A549 (cell line): ENCODE measurements at regions of chr14 and their contacts with region 1.

Region 1: DNA sequence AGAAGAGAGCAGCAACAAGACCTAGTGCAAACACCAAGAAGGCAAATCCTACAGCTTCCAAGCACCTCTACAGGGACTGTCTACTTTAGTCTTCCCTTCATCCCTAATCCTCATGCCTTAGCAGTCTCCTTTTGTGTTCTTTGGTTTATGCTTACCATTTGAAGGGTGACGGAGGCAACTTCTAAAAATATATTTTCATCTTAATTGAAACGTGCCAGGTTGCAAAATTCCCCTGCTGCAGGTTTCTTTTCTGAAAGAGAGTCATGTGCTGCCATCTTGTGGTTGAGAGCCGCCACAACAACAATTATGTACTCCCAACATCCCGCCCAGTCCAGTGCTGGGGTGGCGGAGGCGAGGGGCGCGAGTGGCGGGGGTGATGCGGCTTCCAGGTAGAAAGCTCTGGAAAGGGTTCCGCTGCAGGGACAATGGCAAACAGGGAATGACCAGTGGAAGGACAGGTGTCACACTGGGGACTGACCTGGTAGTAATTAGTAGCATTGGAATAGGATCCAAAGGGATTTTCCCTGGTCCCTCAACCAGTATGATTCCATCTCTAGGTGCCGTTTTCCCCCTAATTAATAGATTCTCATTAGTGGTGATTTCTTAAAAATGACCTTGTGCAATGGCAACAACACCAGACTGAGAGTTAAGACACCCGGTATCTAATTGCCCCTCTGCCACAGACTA is 80.3 kb upstream of the GNG2 start:
- DNase-seq: peak; percentile 61 to 72
- ATAC-seq: peak; percentile 38 to 76; a peak in 4 of 6 replicates
- H3K4me3 ChIP-seq: 0 out of 3 replicates have a peak overlapping the region, but pooled peaks have one; percentile 11
- H3K27ac ChIP-seq: no peak overlapping the region
- H3K4me1 ChIP-seq: no peaks in the 10 kb centered on the region
- CTCF ChIP-seq: peak; percentile 84
- EP300 ChIP-seq: no peak
- POLR2A ChIP-seq: no peak
- RAD21 ChIP-seq: peak; percentile 88 to 92

Region 2: DNA sequence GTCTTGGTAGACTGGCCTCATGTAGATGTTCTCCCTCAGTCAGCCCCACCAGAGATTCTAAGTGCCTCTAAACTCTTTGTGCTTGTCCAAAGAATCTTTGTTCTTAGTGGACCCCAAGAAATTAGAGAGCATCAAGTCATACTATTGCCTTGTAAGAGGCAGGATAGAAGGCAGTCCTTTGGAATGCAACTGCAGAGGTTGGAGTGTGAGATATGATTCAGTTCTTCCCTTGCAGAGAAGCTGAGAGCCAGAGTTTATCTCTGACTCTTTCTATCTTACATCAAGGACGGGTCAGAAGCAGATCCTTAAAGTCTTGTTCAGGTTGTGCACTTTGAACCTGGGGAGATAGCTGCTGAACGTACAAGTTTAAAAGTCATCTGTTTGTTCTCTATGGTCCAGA is 519.0 kb before region 1 on chr14:
- CTCF ChIA-PET with region 1: interaction called, 10 read pairs
- POLR2A ChIA-PET with region 1: no interaction called
- DNase-seq: no peak
- ATAC-seq: no peak
- H3K4me3 ChIP-seq: no peak overlapping the region
- H3K27ac ChIP-seq: no peak overlapping the region
- H3K4me1 ChIP-seq: no peaks in the 10 kb centered on the region
- CTCF ChIP-seq: no peak
- EP300 ChIP-seq: no peak
- POLR2A ChIP-seq: no peak
- RAD21 ChIP-seq: no peak

Region 3: GRCh38 chr14:51283402-51284085 is 496.6 kb before region 1 on chr14:
- CTCF ChIA-PET with region 1: interaction called, 512 read pairs
- POLR2A ChIA-PET with region 1: interaction called, 6 read pairs
- DNase-seq: peak; percentile 78 to 81
- ATAC-seq: peak; percentile 86 to 93
- H3K4me3 ChIP-seq: no peak overlapping the region
- H3K27ac ChIP-seq: no peak overlapping the region
- H3K4me1 ChIP-seq: no peaks in the 10 kb centered on the region
- CTCF ChIP-seq: peak; percentile 96
- EP300 ChIP-seq: no peak
- POLR2A ChIP-seq: no peak
- RAD21 ChIP-seq: peak; percentile 94 to 97

Region 4: DNA sequence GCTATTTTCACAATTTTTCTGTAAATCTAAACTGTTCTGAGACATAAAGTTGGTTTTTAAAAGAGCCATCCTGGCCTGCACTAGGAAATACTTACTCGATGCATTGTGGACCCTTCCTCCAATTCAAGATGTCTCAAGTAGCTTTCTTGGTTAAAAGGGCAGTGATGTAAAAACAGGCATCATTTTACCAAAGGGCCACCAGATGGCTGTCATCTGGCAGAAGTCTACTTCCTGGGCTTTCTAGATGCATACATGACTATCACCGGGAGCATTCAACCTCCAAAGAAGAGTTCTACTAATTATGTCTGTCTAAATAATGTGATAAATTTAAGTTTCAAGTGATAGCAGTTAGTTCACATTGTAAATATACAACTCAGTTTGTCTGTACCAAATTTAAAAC is 225.2 kb before region 1 on chr14:
- CTCF ChIA-PET with region 1: interaction called, 13 read pairs
- POLR2A ChIA-PET with region 1: no interaction called
- DNase-seq: peak in 1 of 2 experiments; percentile 45
- ATAC-seq: peak; percentile 58 to 61; a peak in 4 of 6 replicates
- H3K4me3 ChIP-seq: no peak overlapping the region
- H3K27ac ChIP-seq: peak overlapping the region; percentile 60 to 64
- H3K4me1 ChIP-seq: peaks cover 32% of the 10 kb centered on the region
- CTCF ChIP-seq: peak; percentile 34; the same call in 2 of the 3 replicates
- EP300 ChIP-seq: no peak
- POLR2A ChIP-seq: no peak
- RAD21 ChIP-seq: peak; percentile 29 to 39; a peak in 2 of 5 replicates

Region 5: GRCh38 chr14:51628238-51628637 is 151.9 kb before region 1 on chr14:
- CTCF ChIA-PET with region 1: no interaction called
- POLR2A ChIA-PET with region 1: no interaction called
- DNase-seq: no peak
- ATAC-seq: no peak
- H3K4me3 ChIP-seq: no peak overlapping the region
- H3K27ac ChIP-seq: no peak overlapping the region
- H3K4me1 ChIP-seq: no peaks in the 10 kb centered on the region
- CTCF ChIP-seq: no peak
- EP300 ChIP-seq: no peak
- POLR2A ChIP-seq: no peak
- RAD21 ChIP-seq: no peak

Region 6: GRCh38 chr14:51704545-51704944 is 75.6 kb before region 1 on chr14:
- CTCF ChIA-PET with region 1: interaction called, 12 read pairs
- POLR2A ChIA-PET with region 1: no interaction called
- DNase-seq: no peak
- ATAC-seq: no peak
- H3K4me3 ChIP-seq: no peak overlapping the region
- H3K27ac ChIP-seq: no peak overlapping the region
- H3K4me1 ChIP-seq: peaks cover 6% of the 10 kb centered on the region; the same call in 1 of the 3 replicates
- CTCF ChIP-seq: no peak
- EP300 ChIP-seq: no peak
- POLR2A ChIP-seq: no peak
- RAD21 ChIP-seq: no peak

Region 7: DNA sequence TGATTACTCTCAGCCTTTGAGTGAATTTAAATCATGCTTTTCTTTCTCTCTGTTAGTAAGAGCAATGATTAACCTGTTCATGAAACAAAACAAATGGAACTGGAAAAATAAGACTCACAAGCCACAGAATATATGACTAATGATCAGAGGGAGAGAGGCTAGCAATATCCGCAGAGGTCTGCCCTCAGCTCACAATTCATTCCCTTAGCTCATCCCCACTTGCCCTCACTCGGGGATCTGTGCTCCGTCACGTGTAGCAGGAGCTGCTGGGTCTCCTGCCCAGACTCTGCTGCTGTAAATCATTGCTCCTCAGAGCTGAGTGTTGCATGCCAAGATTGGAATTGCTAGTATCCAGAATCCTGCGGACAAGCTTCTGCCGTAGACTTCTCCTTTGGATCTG is 27.2 kb after region 1 on chr14:
- CTCF ChIA-PET with region 1: interaction called, 13 read pairs
- POLR2A ChIA-PET with region 1: no interaction called
- DNase-seq: no peak
- ATAC-seq: no peak
- H3K4me3 ChIP-seq: no peak overlapping the region
- H3K27ac ChIP-seq: no peak overlapping the region
- H3K4me1 ChIP-seq: no peaks in the 10 kb centered on the region
- CTCF ChIP-seq: no peak
- EP300 ChIP-seq: no peak
- POLR2A ChIP-seq: no peak
- RAD21 ChIP-seq: no peak